HCT116 (cell line): ENCODE measurements at regions of chr14 and their contacts with region 1.

Region 1: DNA sequence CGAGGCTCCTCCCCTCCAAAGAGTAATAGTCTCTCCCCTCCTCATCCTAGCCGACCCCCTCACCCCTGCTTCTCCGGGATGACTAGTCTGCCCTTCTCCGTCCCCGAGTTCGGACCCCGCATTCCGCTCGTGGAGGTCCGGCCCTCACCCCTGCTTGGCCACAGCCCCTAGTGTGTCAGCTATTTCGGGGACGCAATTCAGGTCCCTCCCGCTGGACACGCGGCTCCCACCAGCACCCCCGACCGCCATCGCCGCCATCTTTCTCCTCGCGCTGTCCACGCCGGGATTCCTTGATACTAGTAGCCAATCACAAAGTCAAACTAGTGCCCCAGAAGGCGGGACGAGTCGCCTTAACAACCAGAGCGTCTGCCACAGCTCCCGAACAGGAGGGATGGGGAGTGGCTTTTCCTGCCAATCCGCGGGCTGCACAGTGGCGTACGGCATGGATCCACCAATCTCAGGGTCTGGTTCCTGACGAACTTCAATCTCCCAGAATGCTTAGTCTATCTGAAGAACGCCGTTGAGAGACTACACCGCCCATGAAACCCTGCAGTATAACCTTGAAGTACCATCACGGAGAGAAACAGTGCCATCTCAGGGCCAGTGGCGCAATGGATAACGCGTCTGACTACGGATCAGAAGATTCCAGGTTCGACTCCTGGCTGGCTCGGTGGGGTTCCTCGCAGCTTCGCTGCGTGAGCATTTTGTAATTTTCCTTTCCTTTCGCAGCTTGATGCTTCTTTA is at the start of gene PRMT5:
- DNase-seq: peak; percentile 99
- ATAC-seq: peak; percentile 91
- H3K4me3 ChIP-seq: peak within 1 kb of the TSS; percentile 75 to 96
- H3K27ac ChIP-seq: peak within 1 kb of the TSS; percentile 83
- H3K4me1 ChIP-seq: peaks cover 31 to 64% of the 10 kb centered on the region in 2 experiments
- H3K27me3 ChIP-seq: no peaks in the 10 kb centered on the region
- CTCF ChIP-seq: no peak
- POLR2A ChIP-seq: peak; percentile 78
- RAD21 ChIP-seq: no peak
- total RNA-seq, gene PRMT5: 186 TPM

Region 2: DNA sequence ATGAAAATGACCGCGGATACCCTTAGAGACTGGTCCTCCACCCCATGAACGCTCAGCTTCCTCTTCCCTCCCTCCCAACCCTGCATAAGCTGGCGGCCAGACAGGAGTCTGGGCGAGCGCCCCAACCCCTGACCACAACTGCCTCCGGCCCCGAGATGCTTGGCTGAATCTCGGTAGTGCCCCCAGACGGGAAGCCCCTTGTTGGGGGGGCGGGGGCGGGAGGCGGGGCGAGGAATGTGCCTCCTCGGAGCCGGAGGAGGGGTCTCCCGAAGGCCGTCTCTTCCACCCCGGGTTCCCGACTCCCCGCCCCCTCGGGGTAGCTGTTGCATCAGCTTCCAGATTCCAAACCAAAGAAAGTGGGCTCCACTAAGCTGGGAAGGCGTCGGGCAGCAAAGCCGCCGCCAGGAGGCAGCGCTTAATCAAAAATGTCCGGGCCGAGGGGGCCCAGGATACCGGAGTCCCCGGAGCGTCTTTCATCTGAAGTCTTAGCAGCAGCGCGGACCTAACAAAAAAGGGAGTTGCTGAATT is 106.6 kb before region 1 on chr14:
- CTCF ChIA-PET with region 1: interaction called, 12 read pairs
- POLR2A ChIA-PET with region 1: no interaction called
- RAD21 ChIA-PET with region 1: no interaction called
- intact Hi-C with region 1: no loop called
- DNase-seq: peak; percentile 51
- ATAC-seq: peak; percentile 86
- H3K4me3 ChIP-seq: peak overlapping the region; percentile 29 to 43
- H3K27ac ChIP-seq: no peak overlapping the region
- H3K4me1 ChIP-seq: peaks cover 7 to 35% of the 10 kb centered on the region in 2 experiments
- H3K27me3 ChIP-seq: no peaks in the 10 kb centered on the region
- CTCF ChIP-seq: peak; percentile 81 to 89 (median 87)
- POLR2A ChIP-seq: no peak
- RAD21 ChIP-seq: peak; percentile 88

Region 3: DNA sequence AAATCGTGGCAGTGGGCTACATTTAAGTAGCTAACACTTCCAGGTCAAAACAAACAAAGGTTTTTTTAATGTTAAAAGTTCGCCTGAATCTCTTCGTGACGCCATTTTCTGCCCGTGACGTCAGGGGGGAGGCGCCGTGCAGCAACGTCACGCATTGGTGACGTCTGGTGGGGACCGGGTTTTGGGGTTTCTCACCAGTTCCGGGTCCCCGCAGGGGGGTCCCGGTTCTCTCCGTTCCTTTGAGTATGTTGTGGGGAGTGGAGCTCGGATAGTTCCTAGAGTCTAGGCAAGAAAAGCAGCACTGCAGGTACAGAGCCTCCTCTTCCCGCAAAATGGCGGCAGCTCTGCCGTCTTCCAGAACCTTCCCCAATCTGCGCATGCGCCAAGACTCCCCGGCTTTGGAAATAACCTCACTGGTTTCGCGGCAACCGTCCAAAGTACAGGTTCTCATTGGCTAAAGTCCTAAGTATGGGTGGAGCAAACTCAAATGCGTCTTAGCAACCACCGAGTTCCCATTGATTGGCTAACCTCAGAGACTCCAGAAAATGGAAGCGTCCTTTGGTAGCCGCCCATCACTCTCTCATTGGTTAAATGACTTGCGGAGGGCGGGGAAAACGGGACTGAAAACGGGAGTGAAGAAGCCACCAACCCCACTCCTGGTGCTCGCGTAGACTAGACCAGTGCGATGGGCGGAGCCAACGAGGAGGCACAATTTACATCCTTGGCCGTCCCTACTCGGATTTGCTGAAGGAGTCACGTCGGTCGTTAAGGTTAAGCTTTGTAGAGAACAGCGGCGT is 10.3 kb before region 1 on chr14 and contains the start of gene RBM23:
- CTCF ChIA-PET with region 1: interaction called, 18 read pairs
- POLR2A ChIA-PET with region 1: interaction called, 29 read pairs
- RAD21 ChIA-PET with region 1: no interaction called
- intact Hi-C with region 1: no loop called
- DNase-seq: peak; percentile 100
- ATAC-seq: peak; percentile 96
- H3K4me3 ChIP-seq: peak within 1 kb of the TSS; percentile 97 to 98
- H3K27ac ChIP-seq: peak within 1 kb of the TSS; percentile 94
- H3K4me1 ChIP-seq: peaks cover 9 to 30% of the 10 kb centered on the region in 2 experiments
- H3K27me3 ChIP-seq: no peaks in the 10 kb centered on the region
- CTCF ChIP-seq: no peak
- POLR2A ChIP-seq: peak; percentile 63
- RAD21 ChIP-seq: no peak
- total RNA-seq, gene RBM23: 67.2 TPM

Region 4: DNA sequence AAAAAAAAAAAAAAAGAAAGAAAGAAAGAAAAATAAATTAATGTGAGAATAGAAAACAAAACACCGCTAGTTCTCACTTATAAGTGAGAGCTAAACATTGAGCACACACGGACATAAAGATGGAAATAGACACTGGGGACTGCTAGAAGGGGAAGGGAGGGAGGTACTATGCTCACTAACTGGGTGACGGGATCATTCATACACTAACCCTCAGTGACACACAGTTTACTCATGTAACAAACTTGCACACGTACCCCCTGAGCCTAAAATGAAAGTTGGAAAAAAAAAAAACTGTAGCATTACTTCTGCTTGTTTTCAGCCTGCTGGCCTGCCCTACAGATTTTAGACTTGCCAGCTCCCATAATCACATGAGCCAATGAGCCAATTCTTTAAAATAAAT is 10.4 kb after region 1 on chr14:
- CTCF ChIA-PET with region 1: interaction called, 10 read pairs
- POLR2A ChIA-PET with region 1: no interaction called
- RAD21 ChIA-PET with region 1: no interaction called
- intact Hi-C with region 1: no loop called
- DNase-seq: no peak
- ATAC-seq: no peak
- H3K4me3 ChIP-seq: no peak overlapping the region
- H3K27ac ChIP-seq: no peak overlapping the region
- H3K4me1 ChIP-seq: peaks cover 13 to 14% of the 10 kb centered on the region in 2 experiments
- H3K27me3 ChIP-seq: no peaks in the 10 kb centered on the region
- CTCF ChIP-seq: no peak
- POLR2A ChIP-seq: no peak
- RAD21 ChIP-seq: no peak

Region 5: GRCh38 chr14:22973217-22974032 is 44.1 kb after region 1 on chr14:
- CTCF ChIA-PET with region 1: interaction called, 17 read pairs
- POLR2A ChIA-PET with region 1: no interaction called
- RAD21 ChIA-PET with region 1: interaction called in 1 of 2 experiments, 4 read pairs
- intact Hi-C with region 1: no loop called
- DNase-seq: no peak
- ATAC-seq: peak; percentile 64
- H3K4me3 ChIP-seq: no peak overlapping the region
- H3K27ac ChIP-seq: no peak overlapping the region
- H3K4me1 ChIP-seq: peaks cover 36 to 39% of the 10 kb centered on the region in 2 experiments
- H3K27me3 ChIP-seq: no peaks in the 10 kb centered on the region
- CTCF ChIP-seq: peak in 2 of 3 experiments; percentile 61 to 75; a peak in 4 of 6 replicates
- POLR2A ChIP-seq: no peak
- RAD21 ChIP-seq: no peak